ENCODE measurements at regions of chr15 and their contacts with region 1.

Region 1: DNA sequence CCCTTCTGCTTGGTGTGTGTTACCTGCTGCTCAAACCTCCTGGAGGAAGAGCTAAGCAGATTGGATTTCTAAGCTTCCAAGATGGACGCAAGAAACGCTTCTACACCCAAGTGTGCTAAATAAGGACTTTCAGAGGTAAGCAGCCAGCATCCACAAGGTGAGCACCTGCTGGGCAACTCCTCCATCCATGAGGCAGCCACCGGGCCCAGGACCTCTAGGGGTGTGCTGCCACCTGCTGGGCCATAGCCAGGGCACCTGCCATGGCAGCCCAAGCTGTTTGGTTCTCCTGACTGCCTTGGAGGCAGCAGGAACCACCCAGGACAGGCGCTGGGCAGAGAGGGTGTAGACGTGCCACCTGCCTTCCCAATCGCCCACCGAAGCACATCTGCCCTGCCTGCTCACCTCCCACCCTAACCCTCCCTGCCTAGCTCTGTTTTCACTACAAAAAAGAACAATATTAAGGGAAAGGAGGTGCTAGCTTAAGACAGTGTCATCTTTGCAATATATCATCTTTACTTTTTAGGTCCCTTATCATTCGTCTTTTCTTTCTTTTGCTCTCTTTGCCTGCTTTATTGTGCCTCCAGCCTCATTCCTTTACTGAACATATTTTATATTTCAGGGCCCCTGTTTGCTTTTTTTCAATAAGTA is 12.9 kb downstream of the C15orf62 start:
- DNase-seq: peak; percentile 81
- CTCF ChIP-seq: peak; percentile 95

Region 2: GRCh38 chr15:40684381-40684780 is 98.3 kb before region 1 on chr15:
- CTCF ChIA-PET with region 1: interaction called, 24 read pairs
- POLR2A ChIA-PET with region 1: no interaction called
- DNase-seq: no peak
- CTCF ChIP-seq: no peak

Region 3: GRCh38 chr15:40743921-40744814 is 38.5 kb before region 1 on chr15:
- CTCF ChIA-PET with region 1: interaction called, 15 read pairs
- POLR2A ChIA-PET with region 1: no interaction called
- DNase-seq: no peak
- CTCF ChIP-seq: no peak

Region 4: GRCh38 chr15:40769274-40770146 is 13.2 kb before region 1 on chr15 and contains the start of gene C15orf62:
- CTCF ChIA-PET with region 1: interaction called, 45 read pairs
- POLR2A ChIA-PET with region 1: no interaction called
- DNase-seq: peak; percentile 71
- CTCF ChIP-seq: no peak

Region 5: DNA sequence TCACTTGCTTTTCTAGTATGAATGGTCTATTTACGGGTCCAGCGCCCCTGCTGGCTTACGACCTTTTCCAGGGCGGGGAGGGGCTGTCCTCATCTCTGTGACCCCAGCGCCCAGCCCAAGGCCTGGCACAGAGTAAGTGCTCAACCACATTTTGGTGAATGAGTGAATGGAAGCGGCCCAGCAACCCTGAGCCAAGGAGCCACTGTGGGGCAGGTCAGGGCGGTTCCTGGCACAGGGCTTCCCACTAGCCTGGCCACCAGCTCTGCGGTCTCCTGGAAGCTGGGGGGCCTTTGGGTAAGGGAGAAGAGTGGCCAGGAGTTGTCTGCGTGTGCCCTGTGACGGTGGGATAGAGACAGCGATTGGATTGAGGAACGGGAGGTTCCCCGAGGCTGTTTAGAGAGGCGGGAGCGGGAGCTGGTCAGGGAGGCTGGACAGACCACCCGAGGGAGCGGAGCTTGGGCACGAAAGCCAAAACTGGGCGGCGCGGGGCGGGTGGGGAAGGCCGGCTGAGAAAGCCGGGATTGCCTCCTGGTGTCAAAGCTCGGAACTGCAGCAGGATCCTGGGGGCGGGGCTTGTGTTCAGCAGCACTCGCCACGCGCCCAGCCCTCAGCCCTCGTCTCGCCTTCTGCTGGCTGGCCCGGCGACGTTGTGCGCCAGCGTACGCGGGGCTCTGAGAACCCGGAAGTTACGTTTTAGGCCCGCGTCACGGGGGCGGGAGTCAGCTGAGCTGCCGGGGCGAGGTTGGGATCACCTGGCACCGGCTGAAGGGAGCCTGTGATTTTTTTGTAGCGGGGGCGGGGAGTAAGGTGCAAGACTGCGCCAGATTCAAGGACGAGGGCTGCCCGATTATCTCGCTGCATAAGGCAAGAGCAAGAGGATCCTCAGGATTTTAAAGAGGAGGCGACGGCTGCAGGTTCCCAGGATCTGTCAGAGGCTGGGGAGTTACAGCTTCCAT is 111.3 kb after region 1 on chr15 and contains the start of gene VPS18:
- CTCF ChIA-PET with region 1: interaction called, 10 read pairs
- POLR2A ChIA-PET with region 1: no interaction called
- DNase-seq: peak; percentile 96
- CTCF ChIP-seq: peak; percentile 95

Measured in GM10248 (cell line).